ENCODE measurements at regions of chr2 and their contacts with region 1.

Region 1: DNA sequence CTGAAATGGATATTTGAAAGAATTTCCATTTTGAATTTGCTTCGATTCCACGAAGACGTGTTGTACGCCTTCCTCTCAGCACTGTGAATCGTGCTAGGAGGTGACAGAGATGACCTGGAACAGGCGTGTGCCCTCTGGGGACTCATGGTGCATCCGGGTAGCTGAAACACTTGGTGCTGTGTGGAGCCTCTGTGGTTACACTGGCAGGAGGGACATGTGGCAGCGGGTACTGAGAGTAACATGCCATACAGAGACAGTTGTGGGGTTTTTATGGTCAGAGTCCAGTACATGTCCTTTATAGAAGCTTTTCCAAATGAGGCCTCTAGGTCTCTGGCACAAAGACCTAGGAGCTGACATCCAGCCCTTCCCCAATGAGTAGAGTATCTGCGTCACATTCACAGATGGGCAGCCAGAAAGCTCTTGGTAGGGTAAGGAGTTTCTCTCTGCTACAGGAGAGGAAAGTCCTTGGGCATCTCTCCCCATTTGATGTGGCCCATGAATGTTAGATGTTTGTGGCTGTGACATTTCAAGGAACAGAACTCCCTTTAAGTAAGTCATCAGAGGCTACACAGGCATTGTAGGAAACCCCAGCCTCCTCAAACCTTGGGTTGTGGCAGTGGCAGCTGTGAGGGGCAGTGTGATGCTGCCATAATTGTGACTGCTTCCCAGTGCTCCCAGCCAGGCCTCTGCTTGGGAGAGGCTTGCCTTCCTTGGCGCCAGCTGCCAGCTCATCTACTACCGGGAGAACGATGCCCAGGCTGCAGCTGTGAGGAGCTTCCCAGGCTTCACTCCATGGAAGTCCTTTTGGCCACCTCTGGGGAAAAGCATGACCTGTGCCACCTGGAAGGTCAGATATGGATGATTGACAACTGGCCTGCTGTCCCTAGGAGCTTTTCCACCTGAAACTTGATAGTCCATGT is 80.6 kb downstream of the ACOXL start:
- DNase-seq: no peak
- H3K4me3 ChIP-seq: no peak overlapping the region
- H3K4me3 Mint-ChIP-seq: no peak overlapping the region
- H3K27ac ChIP-seq: no peak overlapping the region
- H3K27ac Mint-ChIP-seq: no peak overlapping the region
- H3K4me1 ChIP-seq: peaks cover 4% of the 10 kb centered on the region
- H3K4me1 Mint-ChIP-seq: peaks cover 3 to 11% (median 4%) of the 10 kb centered on the region in 4 donors
- H3K27me3 ChIP-seq: no peaks in the 10 kb centered on the region
- H3K27me3 Mint-ChIP-seq: peaks cover 2 to 4% of the 10 kb centered on the region in 2 donors

Region 2: DNA sequence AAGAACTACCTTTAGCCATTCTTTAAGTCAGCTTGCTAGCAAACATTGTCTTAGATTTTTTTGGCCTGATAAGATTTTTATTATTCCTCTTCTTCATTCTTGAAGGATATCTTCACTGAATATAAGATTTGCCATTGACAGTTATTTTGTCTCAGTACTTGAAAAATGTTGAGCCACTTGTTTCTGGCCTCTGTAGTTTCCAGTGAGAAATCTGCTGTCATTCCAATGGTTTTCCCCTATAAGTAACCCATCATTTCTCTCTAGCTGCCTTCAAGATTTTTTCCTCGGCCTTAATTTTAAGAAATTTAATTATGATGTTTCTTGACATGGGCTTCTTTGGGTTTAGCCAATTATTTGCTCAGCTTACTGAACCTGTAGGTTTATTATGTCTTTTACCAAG is 48.1 kb before region 1 on chr2:
- CTCF ChIA-PET with region 1: no interaction called
- POLR2A ChIA-PET with region 1: no interaction called
- intact Hi-C with region 1: no loop called
- DNase-seq: no peak
- H3K4me3 ChIP-seq: no peak overlapping the region
- H3K4me3 Mint-ChIP-seq: no peak overlapping the region
- H3K27ac ChIP-seq: no peak overlapping the region
- H3K27ac Mint-ChIP-seq: no peak overlapping the region
- H3K4me1 ChIP-seq: no peaks in the 10 kb centered on the region
- H3K4me1 Mint-ChIP-seq: no peaks in the 10 kb centered on the region
- H3K27me3 ChIP-seq: no peaks in the 10 kb centered on the region
- H3K27me3 Mint-ChIP-seq: peaks cover 10 to 11% of the 10 kb centered on the region in 2 donors

Region 3: GRCh38 chr2:110828330-110828729 is 15.3 kb after region 1 on chr2:
- CTCF ChIA-PET with region 1: interaction called, 14 read pairs
- POLR2A ChIA-PET with region 1: no interaction called
- intact Hi-C with region 1: no loop called
- DNase-seq: no peak
- H3K4me3 ChIP-seq: no peak overlapping the region
- H3K4me3 Mint-ChIP-seq: no peak overlapping the region
- H3K27ac ChIP-seq: no peak overlapping the region
- H3K27ac Mint-ChIP-seq: no peak overlapping the region
- H3K4me1 ChIP-seq: peaks cover 3% of the 10 kb centered on the region
- H3K4me1 Mint-ChIP-seq: peaks cover 4 to 17% (median 12%) of the 10 kb centered on the region in 4 donors
- H3K27me3 ChIP-seq: no peaks in the 10 kb centered on the region
- H3K27me3 Mint-ChIP-seq: peaks cover 0 to 2% of the 10 kb centered on the region in 2 donors

Region 4: DNA sequence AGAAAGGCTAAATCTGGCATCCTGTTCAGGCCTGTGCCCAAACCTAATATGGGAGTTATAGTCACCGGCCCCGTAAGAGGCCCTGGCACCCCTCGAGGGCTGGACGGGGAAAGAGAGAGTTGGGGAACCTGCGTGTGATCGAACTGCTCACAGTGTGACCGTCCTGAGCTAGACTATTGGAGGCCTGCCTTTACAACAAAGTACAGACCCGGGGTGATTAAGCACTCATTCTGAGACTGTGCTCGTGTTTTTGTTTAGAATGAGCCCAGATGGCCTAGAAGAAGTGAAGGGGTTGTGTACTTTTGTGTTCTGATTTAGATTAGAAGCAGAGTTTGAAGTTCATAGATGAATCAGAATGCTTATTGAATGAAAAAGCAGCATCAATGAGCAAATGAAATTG is 34.7 kb after region 1 on chr2:
- CTCF ChIA-PET with region 1: interaction called, 49 read pairs
- POLR2A ChIA-PET with region 1: no interaction called
- intact Hi-C with region 1: no loop called
- DNase-seq: no peak
- H3K4me3 ChIP-seq: no peak overlapping the region
- H3K4me3 Mint-ChIP-seq: peak overlapping the region in 2 of 8 donors; percentile 2 to 18
- H3K27ac ChIP-seq: peak overlapping the region; percentile 4
- H3K27ac Mint-ChIP-seq: peak overlapping the region; percentile 10 to 96 (median 77)
- H3K4me1 ChIP-seq: peaks cover 42% of the 10 kb centered on the region
- H3K4me1 Mint-ChIP-seq: peaks cover 31 to 63% (median 44%) of the 10 kb centered on the region in 4 donors
- H3K27me3 ChIP-seq: no peaks in the 10 kb centered on the region
- H3K27me3 Mint-ChIP-seq: no peaks in the 10 kb centered on the region

Region 5: GRCh38 chr2:110860630-110861029 is 47.6 kb after region 1 on chr2:
- CTCF ChIA-PET with region 1: interaction called, 49 read pairs
- POLR2A ChIA-PET with region 1: no interaction called
- intact Hi-C with region 1: no loop called
- DNase-seq: no peak
- H3K4me3 ChIP-seq: no peak overlapping the region
- H3K4me3 Mint-ChIP-seq: peak overlapping the region in 5 of 8 donors; percentile 26 to 63 (median 44)
- H3K27ac ChIP-seq: no peak overlapping the region
- H3K27ac Mint-ChIP-seq: peak overlapping the region in 6 of 7 donors; percentile 22 to 87 (median 44)
- H3K4me1 ChIP-seq: peaks cover 50% of the 10 kb centered on the region
- H3K4me1 Mint-ChIP-seq: peaks cover 27 to 43% (median 35%) of the 10 kb centered on the region in 4 donors
- H3K27me3 ChIP-seq: no peaks in the 10 kb centered on the region
- H3K27me3 Mint-ChIP-seq: peaks cover 3 to 6% of the 10 kb centered on the region in 2 donors

Region 6: DNA sequence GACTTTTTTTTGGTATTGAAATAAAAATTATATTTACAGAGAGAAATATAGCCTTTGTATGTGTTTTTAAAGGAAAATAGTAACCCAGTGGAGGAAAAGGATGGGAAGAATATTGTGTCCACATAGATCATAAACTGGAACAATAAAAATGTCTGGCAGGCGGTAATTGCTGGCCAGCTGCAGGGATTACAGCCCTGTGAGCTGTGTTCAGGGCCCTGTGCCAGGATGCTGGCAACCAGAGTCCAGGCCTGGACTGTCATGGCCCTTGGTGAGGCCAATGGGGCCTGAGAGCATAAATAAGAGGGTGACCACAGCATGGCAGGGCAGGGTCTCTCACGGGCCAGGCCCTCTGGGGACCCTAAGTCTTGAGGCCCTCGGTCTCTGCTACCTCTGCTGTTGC is 90.6 kb after region 1 on chr2:
- CTCF ChIA-PET with region 1: no interaction called
- POLR2A ChIA-PET with region 1: no interaction called
- intact Hi-C with region 1: no loop called
- DNase-seq: no peak
- H3K4me3 ChIP-seq: no peak overlapping the region
- H3K4me3 Mint-ChIP-seq: no peak overlapping the region
- H3K27ac ChIP-seq: no peak overlapping the region
- H3K27ac Mint-ChIP-seq: no peak overlapping the region
- H3K4me1 ChIP-seq: no peaks in the 10 kb centered on the region
- H3K4me1 Mint-ChIP-seq: peaks cover 0 to 5% (median 3%) of the 10 kb centered on the region in 4 donors
- H3K27me3 ChIP-seq: no peaks in the 10 kb centered on the region
- H3K27me3 Mint-ChIP-seq: peaks cover 3% of the 10 kb centered on the region in 2 donors

Region 7: GRCh38 chr2:111702119-111702803 is 889.3 kb after region 1 on chr2:
- CTCF ChIA-PET with region 1: interaction called, 11 read pairs
- POLR2A ChIA-PET with region 1: no interaction called
- intact Hi-C with region 1: no loop called
- DNase-seq: peak in 4 of 5 donors; percentile 33 to 45 (median 40)
- H3K4me3 ChIP-seq: no peak overlapping the region
- H3K4me3 Mint-ChIP-seq: peak overlapping the region in 2 of 8 donors; percentile 26 to 43
- H3K27ac ChIP-seq: no peak overlapping the region
- H3K27ac Mint-ChIP-seq: peak overlapping the region in 3 of 7 donors; percentile 4 to 70 (median 57)
- H3K4me1 ChIP-seq: peaks cover 29% of the 10 kb centered on the region
- H3K4me1 Mint-ChIP-seq: peaks cover 11 to 27% (median 22%) of the 10 kb centered on the region in 4 donors
- H3K27me3 ChIP-seq: no peaks in the 10 kb centered on the region
- H3K27me3 Mint-ChIP-seq: no peaks in the 10 kb centered on the region

Measured in CD4-positive, alpha-beta memory T cell (primary cell).